ENCODE measurements at regions of chr2 and their contacts with region 1.

Region 1: DNA sequence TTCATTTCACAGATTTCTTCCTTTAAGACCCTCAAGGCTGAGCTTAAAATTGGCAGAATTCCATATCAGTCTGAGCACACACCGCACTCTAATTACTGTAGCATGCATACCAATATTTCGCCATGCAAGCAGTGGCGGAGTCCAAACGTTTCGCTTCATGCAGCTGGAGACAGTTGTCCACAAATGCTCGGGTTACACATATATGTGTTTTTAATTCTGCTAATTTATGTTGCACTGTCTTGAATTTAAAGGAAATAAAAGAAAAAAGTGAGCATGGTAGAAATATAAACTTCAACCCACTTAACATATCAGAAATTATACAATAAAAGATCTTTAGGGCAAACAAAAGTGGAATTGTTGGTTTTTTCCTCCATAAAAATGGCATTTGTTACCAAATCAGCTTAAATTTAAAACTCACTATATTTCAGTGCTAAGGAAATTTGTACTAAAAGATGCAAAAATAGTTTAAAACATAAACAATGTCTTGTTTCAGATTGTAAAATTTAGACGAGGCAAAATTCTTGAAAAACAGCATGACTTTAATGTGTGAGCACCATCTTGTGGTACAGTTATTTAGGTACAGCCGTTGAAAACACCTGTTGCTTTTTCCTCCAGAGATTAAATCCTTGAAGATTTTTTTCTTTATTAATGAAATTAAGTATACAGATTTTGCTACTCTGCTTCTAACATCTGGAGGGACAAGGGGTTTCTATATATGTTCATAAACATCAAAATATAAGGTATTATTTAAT is 24.1 kb upstream of the KANSL1L start:
- DNase-seq: peak in 1 of 2 experiments; percentile 36
- H3K4me3 ChIP-seq: no peak overlapping the region
- H3K27ac ChIP-seq: no peak overlapping the region
- H3K4me1 ChIP-seq: no peaks in the 10 kb centered on the region
- H3K27me3 ChIP-seq: no peaks in the 10 kb centered on the region
- CTCF ChIP-seq: peak; percentile 68

Region 2: DNA sequence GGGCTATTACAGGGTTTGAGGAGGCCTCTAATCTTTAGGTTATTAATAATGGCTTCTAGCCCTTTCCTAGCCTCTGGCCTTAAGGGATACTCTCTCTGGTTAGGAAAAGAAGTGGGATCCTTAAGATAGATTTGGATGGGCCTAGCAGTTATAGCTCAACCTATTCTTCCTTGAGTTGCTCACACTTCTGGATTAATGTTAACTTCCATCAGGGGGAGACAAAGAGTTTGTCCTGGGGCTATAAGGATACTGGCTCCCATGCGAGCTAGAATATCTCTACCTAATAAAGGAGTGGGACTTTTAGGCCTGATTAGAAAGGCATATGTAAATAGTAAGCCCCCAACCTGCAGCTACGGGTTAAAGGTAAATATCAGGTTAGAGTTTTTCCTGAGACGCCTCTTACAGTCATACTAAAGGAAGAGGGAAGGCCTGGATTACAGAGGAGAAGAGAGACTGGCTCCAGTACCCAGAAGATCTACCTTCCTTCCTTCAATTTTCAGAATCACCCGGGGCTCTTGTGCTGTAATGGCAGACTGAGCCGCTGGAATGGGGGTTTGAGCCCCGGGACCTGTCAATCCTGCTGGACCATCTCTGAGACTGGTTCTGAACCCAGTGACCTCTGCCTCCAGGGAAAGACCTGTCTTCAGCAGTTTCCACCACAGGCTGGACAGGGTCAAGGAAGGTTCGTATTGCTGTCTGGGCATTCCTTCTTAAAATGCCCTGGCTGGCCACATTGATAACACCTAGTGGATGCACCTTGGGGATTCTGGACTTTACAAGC is 1802.8 kb before region 1 on chr2:
- CTCF ChIA-PET with region 1: no interaction called
- POLR2A ChIA-PET with region 1: no interaction called
- intact Hi-C with region 1: loop called (anchors 10 kb)
- DNase-seq: no peak
- H3K4me3 ChIP-seq: no peak overlapping the region
- H3K27ac ChIP-seq: no peak overlapping the region
- H3K4me1 ChIP-seq: no peaks in the 10 kb centered on the region
- H3K27me3 ChIP-seq: no peaks in the 10 kb centered on the region
- CTCF ChIP-seq: no peak

Region 3: GRCh38 chr2:209977386-209978239 is 217.7 kb before region 1 on chr2:
- CTCF ChIA-PET with region 1: no interaction called
- POLR2A ChIA-PET with region 1: no interaction called
- intact Hi-C with region 1: loop called (anchors 1 kb)
- DNase-seq: no peak
- H3K4me3 ChIP-seq: no peak overlapping the region
- H3K27ac ChIP-seq: no peak overlapping the region
- H3K4me1 ChIP-seq: no peaks in the 10 kb centered on the region
- H3K27me3 ChIP-seq: no peaks in the 10 kb centered on the region
- CTCF ChIP-seq: peak; percentile 67

Region 4: DNA sequence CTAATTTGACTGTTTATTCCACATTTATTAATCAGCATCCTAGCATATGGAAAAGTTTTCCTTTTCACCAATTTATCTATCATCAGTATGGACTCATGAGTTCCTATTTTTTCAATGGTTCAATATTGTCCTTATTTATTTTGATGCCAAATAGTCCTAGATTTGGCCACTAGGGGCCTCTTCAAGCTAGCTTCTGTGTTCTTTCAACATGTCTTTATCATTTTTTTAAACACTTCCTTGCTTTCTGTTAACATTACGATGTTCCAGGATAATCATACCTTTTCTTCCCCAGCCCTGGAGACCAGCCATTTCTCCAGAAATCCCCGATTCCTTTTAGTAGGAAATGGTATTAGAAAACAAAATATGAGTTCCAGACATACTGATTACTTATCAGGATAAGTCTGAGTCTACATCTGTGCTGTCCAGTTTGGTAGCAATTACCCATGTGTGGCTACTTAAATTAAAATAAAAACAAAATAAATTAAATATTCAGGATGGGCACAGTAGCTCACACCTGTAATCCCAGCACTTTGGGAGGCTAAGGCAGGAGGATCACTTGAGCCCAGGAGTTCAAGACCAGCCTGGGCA is 122.3 kb before region 1 on chr2:
- CTCF ChIA-PET with region 1: no interaction called
- POLR2A ChIA-PET with region 1: no interaction called
- intact Hi-C with region 1: loop called (anchors 10 kb)
- DNase-seq: no peak
- H3K4me3 ChIP-seq: no peak overlapping the region
- H3K27ac ChIP-seq: no peak overlapping the region
- H3K4me1 ChIP-seq: no peaks in the 10 kb centered on the region
- H3K27me3 ChIP-seq: no peaks in the 10 kb centered on the region
- CTCF ChIP-seq: peak; percentile 69

Region 5: DNA sequence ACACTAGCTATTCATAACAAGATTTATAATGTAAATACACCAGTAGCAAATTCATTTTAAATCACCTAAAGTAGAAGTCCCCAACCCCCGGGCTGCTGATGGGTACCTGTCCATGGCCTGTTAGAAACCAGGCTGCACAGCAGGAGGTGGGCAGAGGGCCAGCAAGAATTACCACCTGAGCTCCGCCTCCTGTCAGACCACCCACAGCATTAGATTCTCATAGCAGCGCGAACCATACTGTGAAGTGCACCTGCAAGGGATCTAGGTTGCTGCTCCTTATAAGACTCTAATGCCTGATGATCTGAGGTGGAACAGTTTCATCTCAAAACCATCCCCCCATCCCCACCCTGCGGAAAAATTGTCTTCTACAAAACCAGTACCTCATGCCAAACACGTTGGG is 95.3 kb before region 1 on chr2:
- CTCF ChIA-PET with region 1: no interaction called
- POLR2A ChIA-PET with region 1: no interaction called
- intact Hi-C with region 1: no loop called
- DNase-seq: no peak
- H3K4me3 ChIP-seq: no peak overlapping the region
- H3K27ac ChIP-seq: no peak overlapping the region
- H3K4me1 ChIP-seq: no peaks in the 10 kb centered on the region
- H3K27me3 ChIP-seq: no peaks in the 10 kb centered on the region
- CTCF ChIP-seq: no peak

Region 6: DNA sequence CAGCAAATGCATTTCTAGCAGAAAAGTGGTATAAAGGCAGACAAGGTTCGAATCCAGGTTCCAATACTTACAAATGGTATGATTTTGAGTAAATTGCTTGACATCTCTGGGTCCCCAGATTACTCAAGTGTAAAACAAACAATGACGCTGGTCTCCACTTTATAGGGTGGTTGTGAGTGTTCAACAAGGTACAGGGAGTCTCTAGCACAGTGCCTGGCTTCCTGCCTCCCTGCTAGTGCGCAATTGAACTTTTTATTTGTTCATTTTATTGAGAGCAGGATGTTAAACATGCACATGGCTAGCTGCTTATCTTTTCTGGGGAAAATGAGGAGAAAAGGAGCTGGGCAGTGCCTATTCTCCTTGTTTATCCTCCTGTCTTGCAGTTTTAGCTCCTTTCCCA is 194.6 kb after region 1 on chr2:
- CTCF ChIA-PET with region 1: no interaction called
- POLR2A ChIA-PET with region 1: no interaction called
- intact Hi-C with region 1: no loop called
- DNase-seq: no peak
- H3K4me3 ChIP-seq: no peak overlapping the region
- H3K27ac ChIP-seq: no peak overlapping the region
- H3K4me1 ChIP-seq: no peaks in the 10 kb centered on the region
- H3K27me3 ChIP-seq: no peaks in the 10 kb centered on the region
- CTCF ChIP-seq: no peak